ENCODE measurements at regions of chr11 and their contacts with region 1.

Region 1: DNA sequence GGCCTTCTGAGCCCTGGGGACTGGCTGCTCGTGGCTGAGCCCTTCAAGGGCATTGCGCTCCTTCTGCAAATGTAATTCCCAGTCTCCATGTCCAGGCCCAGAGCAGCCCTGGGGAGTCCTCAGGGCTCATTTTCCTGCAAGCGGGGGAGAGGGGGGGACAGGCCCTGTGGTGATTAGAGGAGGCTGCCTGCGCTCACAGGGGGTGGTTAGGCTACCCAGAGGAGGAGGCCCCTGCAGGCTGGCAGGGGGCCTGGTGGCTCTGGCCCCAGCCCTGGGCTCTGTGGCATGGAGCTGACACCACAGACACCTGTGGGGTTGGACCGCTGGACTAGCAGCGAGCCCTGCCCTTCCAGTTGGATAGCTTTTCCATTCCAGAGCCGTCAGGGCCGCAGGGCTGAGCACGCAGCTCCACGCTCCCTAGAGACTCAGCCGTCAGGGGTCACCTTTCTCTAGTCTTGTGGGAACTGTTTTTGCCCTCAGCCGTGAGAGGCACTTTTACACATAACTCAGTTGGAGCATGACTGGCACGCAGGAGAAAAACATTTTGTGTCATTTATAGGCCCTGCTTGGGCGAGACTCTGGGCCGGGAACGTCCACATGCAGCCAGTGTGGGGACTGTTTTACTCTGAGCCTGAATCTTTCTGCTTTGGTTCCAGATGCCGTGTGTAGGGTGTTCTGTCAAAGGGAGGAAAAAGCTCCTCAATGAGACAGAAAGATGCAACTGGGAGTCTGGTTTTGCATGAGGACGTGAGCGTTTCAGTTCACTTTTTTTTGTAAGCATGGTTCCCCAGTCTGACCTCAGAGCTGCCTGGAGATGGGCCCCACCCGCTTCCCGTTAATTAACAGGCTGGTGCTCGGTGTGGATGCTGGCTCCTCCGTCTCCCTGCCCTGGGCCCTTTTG is 58.1 kb downstream of the LRP5 start:
- DNase-seq: peak; percentile 39 to 48
- ATAC-seq: peak; percentile 25 to 61 (median 44)
- H3K4me3 ChIP-seq: no peak overlapping the region
- H3K27ac ChIP-seq: peak overlapping the region; percentile 78 to 94 (median 84)
- H3K4me1 ChIP-seq: peaks cover 43 to 63% (median 59%) of the 10 kb centered on the region in 9 donors
- H3K27me3 ChIP-seq: peaks cover 0 to 3% (median 0%) of the 10 kb centered on the region in 7 donors
- CTCF ChIP-seq: no peak

Region 2: DNA sequence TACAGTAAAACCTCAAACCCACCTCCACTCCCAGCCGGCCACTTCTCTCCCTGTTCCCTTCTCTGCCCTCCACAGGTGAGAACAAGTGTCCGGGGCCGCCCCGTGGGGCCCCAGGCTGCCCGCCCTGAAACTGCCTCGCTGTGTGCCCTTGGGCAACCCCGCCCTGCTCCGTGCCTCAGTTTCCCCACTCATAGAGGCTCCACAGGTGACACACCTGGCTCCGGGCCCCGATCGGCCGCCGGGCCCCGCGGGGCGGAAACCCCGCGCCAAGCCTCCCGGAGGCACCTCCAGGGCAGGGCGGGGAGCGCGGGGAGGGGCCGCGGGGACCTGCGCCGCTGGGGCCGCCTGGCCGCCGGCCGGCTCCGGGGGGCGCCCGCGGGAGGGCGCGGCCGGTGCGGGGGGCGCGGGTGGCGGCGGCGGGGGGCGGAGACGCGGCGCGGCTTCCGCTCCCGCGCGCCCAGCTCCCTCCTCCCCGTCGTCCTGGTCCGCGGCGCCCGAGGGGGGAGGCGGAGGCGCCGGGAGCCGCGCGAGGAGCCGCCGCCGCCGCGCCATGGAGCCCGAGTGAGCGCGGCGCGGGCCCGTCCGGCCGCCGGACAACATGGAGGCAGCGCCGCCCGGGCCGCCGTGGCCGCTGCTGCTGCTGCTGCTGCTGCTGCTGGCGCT is 58.2 kb before region 1 on chr11 and contains the start of gene LRP5:
- intact Hi-C with region 1: loop called in 4 of 10 experiments (anchors 5 kb)
- DNase-seq: no peak
- ATAC-seq: peak in 3 of 8 donors; percentile 15 to 21 (median 17)
- H3K4me3 ChIP-seq: peak within 1 kb of the TSS; percentile 60 to 89 (median 72)
- H3K27ac ChIP-seq: peak within 1 kb of the TSS; percentile 72 to 95 (median 86)
- H3K4me1 ChIP-seq: peaks cover 22 to 49% (median 45%) of the 10 kb centered on the region in 9 donors
- H3K27me3 ChIP-seq: peaks cover 0 to 32% (median 0%) of the 10 kb centered on the region in 7 donors
- CTCF ChIP-seq: no peak
- total RNA-seq, gene LRP5: 33.9 to 73.3 (median 46.3) TPM

Region 3: DNA sequence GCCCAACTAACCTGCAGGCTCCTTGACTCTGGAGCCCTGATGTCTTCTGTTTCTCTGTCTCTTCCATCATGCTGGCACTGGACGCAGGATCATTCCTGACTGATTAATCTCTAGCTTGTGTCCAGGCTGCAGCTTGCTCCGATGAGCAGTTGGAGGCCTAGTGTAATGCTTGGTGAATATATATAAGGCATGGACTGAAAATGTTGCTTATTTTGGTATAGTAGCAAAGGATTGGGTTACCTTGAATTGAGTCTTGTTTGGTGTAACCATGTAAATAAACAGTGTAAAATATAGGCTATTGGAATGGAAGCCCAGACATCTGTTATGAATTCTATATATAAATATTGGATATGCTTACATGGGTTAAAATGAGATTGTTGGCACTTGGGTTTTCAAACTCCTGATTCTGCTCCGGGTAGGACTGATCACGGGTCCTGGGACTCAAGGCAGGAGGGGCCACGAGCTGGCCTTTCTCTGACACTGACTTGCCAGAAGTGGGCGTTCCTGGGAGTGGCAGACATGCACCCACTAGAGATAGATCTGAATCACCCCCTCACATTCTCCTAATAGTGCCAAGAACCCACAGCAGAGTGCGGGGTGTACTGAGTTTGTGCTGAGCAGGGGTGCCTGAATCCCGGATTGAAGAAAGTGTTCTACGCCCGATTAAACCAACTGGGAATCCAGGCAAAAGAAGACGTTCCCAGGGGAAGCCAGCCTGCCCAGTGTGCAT is 32.2 kb before region 1 on chr11:
- intact Hi-C with region 1: loop called in 1 of 10 experiments (anchors 5 kb)
- DNase-seq: no peak
- ATAC-seq: peak; percentile 19 to 71 (median 50)
- H3K4me3 ChIP-seq: no peak overlapping the region
- H3K27ac ChIP-seq: peak overlapping the region in 8 of 10 donors; percentile 7 to 75 (median 46)
- H3K4me1 ChIP-seq: peaks cover 31 to 79% (median 59%) of the 10 kb centered on the region in 9 donors
- H3K27me3 ChIP-seq: no peaks in the 10 kb centered on the region
- CTCF ChIP-seq: no peak

Region 4: DNA sequence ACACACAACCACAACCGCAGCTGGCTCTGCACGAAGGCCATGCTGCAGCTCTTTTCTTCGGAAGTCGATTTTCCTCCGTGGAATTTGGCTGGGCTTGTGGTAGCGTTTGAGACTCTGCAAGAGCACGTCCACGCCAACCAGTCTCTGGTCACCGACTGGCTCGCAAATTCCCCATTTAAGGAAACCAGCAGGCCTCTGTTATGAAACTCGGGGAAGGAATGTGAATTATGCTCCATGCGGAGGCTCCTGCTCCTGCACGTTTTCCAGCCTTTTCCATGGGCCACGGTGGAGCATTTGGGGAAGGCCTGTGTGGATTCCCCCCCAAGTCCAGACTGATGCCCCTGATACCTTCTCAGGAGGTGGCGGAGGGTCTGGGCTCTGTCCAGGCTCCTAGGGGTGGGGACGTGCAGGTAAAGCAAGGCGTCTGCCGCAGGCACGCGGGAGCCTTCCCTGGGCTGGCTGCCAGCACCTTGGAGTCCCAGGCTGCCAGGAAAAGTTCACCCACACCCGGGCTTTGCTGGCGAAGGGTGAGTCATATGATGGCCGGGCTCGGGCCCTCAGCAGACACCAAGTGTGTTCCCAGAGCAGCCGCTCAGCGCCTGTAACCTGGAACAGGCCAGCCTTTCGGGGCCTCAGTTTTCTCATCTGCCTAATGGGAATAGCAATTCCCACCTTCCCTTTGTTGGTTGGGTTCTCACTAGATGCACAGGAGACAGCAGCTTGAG is 16.2 kb before region 1 on chr11:
- intact Hi-C with region 1: loop called in 1 of 10 experiments (anchors 2 kb)
- DNase-seq: peak; percentile 76 to 85
- ATAC-seq: peak; percentile 73 to 89 (median 85)
- H3K4me3 ChIP-seq: no peak overlapping the region
- H3K27ac ChIP-seq: peak overlapping the region; percentile 67 to 93 (median 81)
- H3K4me1 ChIP-seq: peaks cover 9 to 68% (median 43%) of the 10 kb centered on the region in 9 donors
- H3K27me3 ChIP-seq: no peaks in the 10 kb centered on the region
- CTCF ChIP-seq: no peak

Measured in heart right ventricle (tissue), 16 donors.